Cardiac septum (tissue), 1 donor: ENCODE measurements at regions of chr11 and their contacts with region 1.

Region 1: DNA sequence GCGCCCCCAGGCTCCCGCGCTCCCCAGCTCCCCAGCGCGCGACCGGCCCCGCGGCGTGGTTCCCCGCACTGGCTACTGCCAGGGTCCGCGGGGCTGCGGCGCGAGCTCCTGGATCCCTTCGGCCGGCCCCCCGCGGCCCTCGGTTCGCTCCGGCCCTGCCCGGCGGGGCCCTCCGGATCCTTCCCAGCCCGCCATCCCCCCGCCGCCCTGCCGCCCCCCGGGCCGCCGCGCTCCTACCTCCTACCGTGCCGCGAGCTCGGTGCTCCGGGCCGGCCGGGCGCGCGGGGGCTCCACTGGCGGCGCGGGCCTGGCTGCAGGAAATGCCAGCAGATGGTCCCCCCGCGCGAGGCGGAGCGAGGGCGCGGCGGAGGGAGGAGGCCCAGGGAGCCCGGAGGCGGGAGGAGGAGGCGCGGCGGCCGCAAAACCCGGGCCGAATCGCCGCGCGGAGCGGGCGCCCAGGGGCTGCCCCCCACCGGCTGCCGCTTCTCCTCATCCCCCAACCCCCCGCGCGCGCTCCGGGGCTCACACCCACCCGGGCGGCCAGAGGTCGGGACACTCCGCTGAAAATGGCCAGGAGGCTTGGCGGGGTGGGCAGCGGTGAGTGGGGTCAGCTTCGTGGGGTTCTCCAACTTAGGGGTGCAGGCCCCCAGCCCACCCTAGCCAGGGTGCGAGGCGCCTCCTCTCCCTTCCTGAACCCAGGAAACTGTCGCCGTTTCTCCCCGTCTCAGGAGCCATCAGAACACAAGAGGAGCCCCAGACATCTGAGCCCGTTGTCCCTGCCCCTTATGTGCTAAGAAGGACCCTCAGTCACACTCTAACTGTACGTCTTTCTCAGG is at the start of gene OSBPL5:
- DNase-seq: peak; percentile 89
- total RNA-seq, gene OSBPL5: 16.6 TPM

Region 2: GRCh38 chr11:3126207-3126862 is 38.9 kb before region 1 on chr11:
- intact Hi-C with region 1: loop called (anchors 5 kb)
- DNase-seq: peak; percentile 71